ENCODE measurements at regions of chr12 and their contacts with region 1.

Region 1: GRCh38 chr12:114476159-114476558 is 70.2 kb upstream of the TBX5 start:
- DNase-seq: no peak
- H3K4me3 ChIP-seq: no peak overlapping the region
- H3K27ac ChIP-seq: no peak overlapping the region
- H3K4me1 ChIP-seq: peaks cover 0 to 9% (median 0%) of the 10 kb centered on the region in 4 experiments; a peak in 2 of 7 replicates
- H3K27me3 ChIP-seq: peaks cover 21 to 45% (median 40%) of the 10 kb centered on the region in 4 experiments
- CTCF ChIP-seq: peak in 2 of 3 experiments; percentile 50 to 79; a peak in 3 of 4 replicates
- EP300 ChIP-seq: no peak
- POLR2A ChIP-seq: no peak
- RAD21 ChIP-seq: peak; percentile 68 to 73

Region 2: DNA sequence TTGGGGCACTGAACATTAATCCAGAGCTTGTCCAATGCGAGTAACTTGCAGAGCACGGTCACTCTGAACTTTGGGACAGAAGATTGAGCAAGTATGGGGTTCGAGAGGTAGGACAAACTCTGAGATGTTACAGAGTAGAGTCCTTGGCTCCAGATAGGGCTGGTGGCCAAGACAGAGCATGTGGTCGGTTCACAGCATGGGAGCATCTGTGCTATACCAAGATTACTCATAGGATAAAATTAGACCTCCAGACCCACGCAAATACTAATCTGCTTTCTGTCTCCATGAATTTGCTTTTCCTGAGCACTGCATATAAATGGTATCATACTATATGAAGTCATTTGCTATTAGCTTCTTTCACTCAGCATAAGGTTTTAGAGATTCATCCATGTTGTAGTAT is 23.2 kb after region 1 on chr12:
- CTCF ChIA-PET with region 1: interaction called, 51 read pairs
- POLR2A ChIA-PET with region 1: no interaction called
- DNase-seq: no peak
- H3K4me3 ChIP-seq: no peak overlapping the region
- H3K27ac ChIP-seq: no peak overlapping the region
- H3K4me1 ChIP-seq: no peaks in the 10 kb centered on the region
- H3K27me3 ChIP-seq: peaks cover 3 to 30% (median 21%) of the 10 kb centered on the region in 4 experiments
- CTCF ChIP-seq: no peak
- EP300 ChIP-seq: no peak
- POLR2A ChIP-seq: no peak
- RAD21 ChIP-seq: no peak

Region 3: DNA sequence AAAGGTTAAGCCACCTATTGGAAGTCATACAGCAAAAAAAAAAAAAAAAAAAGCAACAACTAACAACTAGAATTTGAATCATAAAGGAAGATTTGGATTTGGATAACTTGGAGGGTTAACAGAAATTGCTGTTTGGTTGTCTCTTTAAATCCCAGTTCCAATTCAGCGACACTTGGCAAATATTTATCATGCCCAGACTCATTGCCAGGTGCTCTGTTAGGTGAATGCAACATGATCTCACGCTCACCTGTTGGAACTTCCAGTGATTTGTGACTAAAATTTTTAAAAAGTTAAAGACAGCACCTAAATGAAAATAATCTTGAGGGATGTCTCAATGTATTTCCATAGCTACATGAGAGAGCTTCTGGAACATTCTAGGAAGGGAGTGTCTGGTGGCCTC is 104.1 kb after region 1 on chr12:
- CTCF ChIA-PET with region 1: no interaction called
- POLR2A ChIA-PET with region 1: no interaction called
- DNase-seq: no peak
- H3K4me3 ChIP-seq: no peak overlapping the region
- H3K27ac ChIP-seq: no peak overlapping the region
- H3K4me1 ChIP-seq: no peaks in the 10 kb centered on the region
- H3K27me3 ChIP-seq: no peaks in the 10 kb centered on the region
- CTCF ChIP-seq: no peak
- EP300 ChIP-seq: no peak
- POLR2A ChIP-seq: no peak
- RAD21 ChIP-seq: no peak

Measured in H1 (cell line).